ENCODE measurements at regions of chr6 and their contacts with region 1.

Region 1: DNA sequence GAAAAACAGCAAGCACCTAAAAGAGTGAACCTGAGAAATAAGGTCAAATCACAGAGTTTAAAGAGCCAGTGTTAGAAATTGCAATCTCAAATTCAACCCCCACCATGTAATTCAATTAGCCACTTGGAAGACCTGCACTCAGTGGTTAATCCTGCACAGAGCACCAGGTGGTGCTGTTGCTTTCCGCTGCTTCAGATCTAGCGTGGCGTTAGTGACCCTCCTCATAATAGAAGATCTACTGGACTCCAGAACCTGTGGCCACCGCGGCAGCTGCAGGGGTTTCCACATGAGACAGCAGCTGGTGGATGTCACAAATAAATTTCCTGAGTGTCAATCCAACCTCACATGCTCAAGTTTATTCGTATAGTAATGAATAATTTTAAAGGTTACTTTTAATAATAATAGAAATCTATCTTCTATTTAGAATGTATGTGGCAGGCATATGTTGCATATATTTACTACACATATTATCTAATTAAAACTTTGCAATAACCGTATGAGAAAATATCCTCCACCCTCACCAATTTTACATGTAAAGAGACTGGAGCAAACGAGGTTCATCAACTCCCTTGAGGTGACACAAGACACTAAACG is 84.4 kb downstream of the SYNE1 start:
- DNase-seq: peak; percentile 81
- H3K4me3 Mint-ChIP-seq: no peak overlapping the region
- H3K27ac Mint-ChIP-seq: no peak overlapping the region
- H3K4me1 Mint-ChIP-seq: no peaks in the 10 kb centered on the region
- H3K27me3 Mint-ChIP-seq: no peaks in the 10 kb centered on the region
- CTCF ChIP-seq: peak; percentile 84

Region 2: DNA sequence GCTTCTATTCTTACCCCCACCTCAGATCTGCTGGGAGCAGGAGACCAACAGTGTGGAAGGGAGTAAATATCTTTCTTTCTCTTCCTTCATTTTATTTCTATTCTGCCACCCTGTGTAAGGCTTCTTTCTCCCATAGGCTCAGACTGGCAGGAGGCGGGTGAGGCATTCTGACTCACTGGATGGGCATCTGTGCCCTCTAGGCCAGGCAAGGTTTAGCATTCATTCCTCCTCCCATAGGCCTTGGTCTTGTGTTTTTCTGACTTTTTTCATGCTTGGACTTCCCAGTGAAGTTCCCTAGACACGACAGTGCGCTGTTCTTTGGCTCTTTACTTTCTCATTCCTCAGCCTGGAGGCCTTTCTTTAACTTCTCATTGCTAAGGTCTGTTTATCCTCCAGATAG is 150.7 kb before region 1 on chr6:
- CTCF ChIA-PET with region 1: no interaction called
- POLR2A ChIA-PET with region 1: no interaction called
- intact Hi-C with region 1: no loop called
- DNase-seq: peak; percentile 84
- H3K4me3 Mint-ChIP-seq: no peak overlapping the region
- H3K27ac Mint-ChIP-seq: peak overlapping the region; percentile 96
- H3K4me1 Mint-ChIP-seq: peaks cover 21% of the 10 kb centered on the region
- H3K27me3 Mint-ChIP-seq: no peaks in the 10 kb centered on the region
- CTCF ChIP-seq: no peak

Region 3: DNA sequence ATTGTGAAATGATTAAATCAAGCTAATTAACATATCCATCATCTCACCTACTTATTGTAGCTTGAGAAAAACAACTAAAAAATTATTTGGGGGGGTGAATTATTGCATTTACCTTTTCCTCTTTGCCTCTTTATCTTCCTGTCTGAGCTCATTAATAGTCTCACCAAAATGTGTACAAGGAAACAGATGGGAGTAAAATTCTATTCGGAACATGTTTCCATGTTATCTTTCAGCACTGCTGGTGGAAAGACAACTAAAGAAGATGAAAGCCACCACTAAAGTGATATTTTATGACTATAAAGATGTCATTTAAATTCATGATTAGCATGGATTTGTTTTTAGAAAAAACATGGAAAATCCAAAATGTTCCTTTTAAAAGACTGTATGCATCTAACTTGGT is 18.2 kb before region 1 on chr6:
- CTCF ChIA-PET with region 1: interaction called, 11 read pairs
- POLR2A ChIA-PET with region 1: no interaction called
- intact Hi-C with region 1: no loop called
- DNase-seq: no peak
- H3K4me3 Mint-ChIP-seq: no peak overlapping the region
- H3K27ac Mint-ChIP-seq: no peak overlapping the region
- H3K4me1 Mint-ChIP-seq: no peaks in the 10 kb centered on the region
- H3K27me3 Mint-ChIP-seq: no peaks in the 10 kb centered on the region
- CTCF ChIP-seq: no peak

Region 4: GRCh38 chr6:152587473-152587872 is 34.8 kb after region 1 on chr6:
- CTCF ChIA-PET with region 1: interaction called, 11 read pairs
- POLR2A ChIA-PET with region 1: no interaction called
- intact Hi-C with region 1: no loop called
- DNase-seq: no peak
- H3K4me3 Mint-ChIP-seq: no peak overlapping the region
- H3K27ac Mint-ChIP-seq: no peak overlapping the region
- H3K4me1 Mint-ChIP-seq: no peaks in the 10 kb centered on the region
- H3K27me3 Mint-ChIP-seq: no peaks in the 10 kb centered on the region
- CTCF ChIP-seq: no peak

Region 5: GRCh38 chr6:152642989-152643388 is 90.3 kb after region 1 on chr6:
- CTCF ChIA-PET with region 1: interaction called, 209 read pairs
- POLR2A ChIA-PET with region 1: interaction called, 25 read pairs
- intact Hi-C with region 1: loop called (anchors 1 kb)
- DNase-seq: peak; percentile 70
- H3K4me3 Mint-ChIP-seq: no peak overlapping the region
- H3K27ac Mint-ChIP-seq: no peak overlapping the region
- H3K4me1 Mint-ChIP-seq: peaks cover 2% of the 10 kb centered on the region
- H3K27me3 Mint-ChIP-seq: peaks cover 4% of the 10 kb centered on the region
- CTCF ChIP-seq: peak; percentile 72

Region 6: DNA sequence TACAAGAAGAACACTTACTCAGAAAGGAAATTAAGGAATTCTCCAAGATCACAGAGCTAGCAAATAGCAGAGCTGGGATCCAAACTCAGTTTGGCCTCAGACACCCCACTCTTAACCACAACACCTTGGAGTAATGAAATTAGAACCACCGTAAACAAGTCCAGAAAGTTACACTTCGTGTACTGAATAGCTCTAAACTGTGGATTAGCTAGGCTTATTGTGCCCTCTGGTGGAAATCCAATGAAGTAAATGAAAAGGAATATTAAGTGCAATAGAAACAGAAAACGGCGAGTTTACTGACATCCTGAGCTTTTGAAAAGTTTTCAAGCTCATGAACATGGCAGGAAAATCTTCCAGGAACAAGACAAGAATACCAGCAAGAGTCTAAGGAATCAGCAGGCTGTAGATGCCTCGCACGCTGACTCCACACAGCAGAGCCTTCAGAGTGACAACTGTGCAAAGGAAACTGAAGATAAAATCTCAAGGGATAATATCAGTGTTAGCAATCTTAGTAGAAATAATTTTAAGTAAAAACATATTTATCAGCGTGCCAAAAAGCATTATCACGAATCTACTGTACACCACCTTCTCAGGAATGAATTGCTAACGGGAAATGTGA is 395.5 kb after region 1 on chr6:
- CTCF ChIA-PET with region 1: interaction called, 3 read pairs
- POLR2A ChIA-PET with region 1: no interaction called
- intact Hi-C with region 1: loop called (anchors 2 kb)
- DNase-seq: peak; percentile 71
- H3K4me3 Mint-ChIP-seq: no peak overlapping the region
- H3K27ac Mint-ChIP-seq: no peak overlapping the region
- H3K4me1 Mint-ChIP-seq: peaks cover 15% of the 10 kb centered on the region
- H3K27me3 Mint-ChIP-seq: peaks cover 19% of the 10 kb centered on the region
- CTCF ChIP-seq: peak; percentile 77

Measured in MCF 10A (cell line).